Activated naive CD4-positive, alpha-beta T cell treated with anti-CD3 and anti-CD28 coated beads, Interleukin-2, amount 10 ng/mL, durations not matched to agents 7 days and 5 days (primary cell): ENCODE measurements at regions of chr6 and their contacts with region 1.

Region 1: DNA sequence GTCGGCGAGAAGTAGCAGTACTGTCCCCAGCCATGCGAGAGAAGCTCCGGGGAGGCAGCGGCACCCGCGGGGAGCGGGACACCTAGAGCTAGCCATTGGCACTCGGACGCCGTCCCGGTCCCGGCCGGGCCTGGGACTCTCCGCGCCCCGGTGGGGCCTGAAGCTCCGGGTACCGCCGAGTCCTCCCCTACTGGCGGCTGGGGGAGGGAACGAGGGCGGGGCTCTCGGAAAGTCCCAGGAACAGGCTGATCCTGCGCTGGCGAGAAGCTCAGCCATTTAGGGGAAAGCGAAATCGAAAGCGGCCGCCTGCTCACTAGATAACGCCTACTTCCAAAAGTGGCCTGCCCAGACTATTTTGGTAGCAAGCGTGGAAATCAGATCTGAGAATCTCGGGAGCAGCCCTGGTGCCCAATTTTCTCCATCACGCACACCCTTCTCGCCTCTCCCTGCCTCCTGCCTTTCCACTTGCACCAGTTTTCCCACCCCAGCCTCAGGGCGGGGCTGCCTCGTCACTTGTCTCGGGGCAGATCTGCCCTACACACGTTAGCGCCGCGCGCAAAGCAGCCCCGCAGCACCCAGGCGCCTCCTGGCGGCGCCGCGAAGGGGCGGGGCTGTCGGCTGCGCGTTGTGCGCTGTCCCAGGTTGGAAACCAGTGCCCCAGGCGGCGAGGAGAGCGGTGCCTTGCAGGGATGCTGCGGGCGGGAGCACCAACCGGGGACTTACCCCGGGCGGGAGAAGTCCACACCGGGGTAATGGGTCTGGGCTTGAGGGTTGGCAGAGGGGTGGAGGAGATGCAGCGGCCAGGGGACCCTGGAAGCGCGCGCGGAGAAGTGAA is at the starts of genes PSMB9 and TAP1:
- DNase-seq: peak; percentile 98
- H3K4me3 Mint-ChIP-seq: peak within 1 kb of the TSS; percentile 96
- H3K27ac Mint-ChIP-seq: peak within 1 kb of the TSS; percentile 99
- H3K4me1 Mint-ChIP-seq: peaks cover 63% of the 10 kb centered on the region
- H3K27me3 Mint-ChIP-seq: no peaks in the 10 kb centered on the region

Region 2: GRCh38 chr6:32971581-32972352 is 118.0 kb after region 1 on chr6:
- CTCF ChIA-PET with region 1: interaction called, 24 read pairs
- DNase-seq: peak; percentile 99
- H3K4me3 Mint-ChIP-seq: peak overlapping the region; percentile 85
- H3K27ac Mint-ChIP-seq: peak overlapping the region; percentile 97
- H3K4me1 Mint-ChIP-seq: peaks cover 25% of the 10 kb centered on the region
- H3K27me3 Mint-ChIP-seq: peaks cover 10% of the 10 kb centered on the region